PC-3 (cell line): ENCODE measurements at regions of chr4 and their contacts with region 1.

Region 1: DNA sequence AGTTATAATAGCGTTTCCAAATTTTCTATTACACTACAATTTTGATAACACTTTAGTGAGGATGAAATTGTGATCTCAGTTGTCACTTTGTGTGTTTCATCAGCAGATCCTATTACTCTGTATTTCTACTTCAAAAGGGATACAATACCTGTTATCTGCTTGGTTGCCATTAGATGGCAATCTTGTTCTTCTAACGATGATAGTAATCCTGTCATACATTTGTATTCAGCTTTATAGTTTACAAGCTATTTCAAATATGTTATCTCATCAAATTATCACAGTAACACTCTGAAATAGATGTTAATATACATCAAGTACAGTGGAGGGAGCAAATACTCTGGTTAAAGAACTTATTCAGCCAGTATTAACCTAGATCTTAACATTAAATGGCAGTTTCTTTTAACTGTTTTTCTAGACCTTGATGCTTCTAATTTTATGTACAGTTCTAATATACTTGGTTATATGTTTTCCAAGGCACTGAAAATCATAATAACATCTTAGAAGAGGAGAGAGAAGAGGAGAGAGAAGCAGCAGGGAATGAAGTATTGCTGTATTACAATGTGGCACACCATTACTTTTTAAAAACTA is 292.0 kb downstream of the CCSER1 start:
- DNase-seq: peak; percentile 56
- ATAC-seq: peak; percentile 81
- H3K4me3 ChIP-seq: no peak overlapping the region
- H3K27ac ChIP-seq: no peak overlapping the region
- H3K4me1 ChIP-seq: no peaks in the 10 kb centered on the region; the same call in 1 of the 2 replicates
- H3K27me3 ChIP-seq: no peaks in the 10 kb centered on the region
- CTCF ChIP-seq: peak; percentile 78

Region 2: DNA sequence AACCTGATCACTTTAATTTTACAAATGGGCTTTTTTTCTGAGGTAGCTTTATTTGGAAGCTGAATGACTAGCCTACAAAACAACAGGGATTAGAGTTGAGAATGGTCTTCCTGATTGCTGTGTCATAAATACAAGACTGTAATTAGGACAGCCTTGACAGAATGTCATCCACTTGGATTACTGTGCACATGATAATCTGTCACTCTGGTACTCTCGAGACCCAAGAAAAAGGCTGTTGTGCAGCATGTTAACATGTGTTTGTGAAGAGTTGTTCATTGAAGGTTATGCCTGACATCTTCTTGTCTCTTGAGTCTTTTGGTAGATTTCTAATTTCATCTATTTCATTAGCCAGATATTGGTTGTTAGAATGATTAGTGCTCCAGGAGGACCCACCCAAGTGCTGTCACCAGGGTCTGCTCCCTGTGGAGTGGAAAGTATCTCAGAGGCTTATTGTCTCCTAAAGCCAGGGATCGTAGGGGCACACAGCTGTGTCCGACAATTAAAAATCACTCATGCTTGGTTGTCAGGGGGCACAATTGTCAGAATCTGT is 899.4 kb before region 1 on chr4:
- CTCF ChIA-PET with region 1: no interaction called
- POLR2A ChIA-PET with region 1: no interaction called
- intact Hi-C with region 1: no loop called
- DNase-seq: no peak
- ATAC-seq: no peak
- H3K4me3 ChIP-seq: no peak overlapping the region
- H3K27ac ChIP-seq: no peak overlapping the region
- H3K4me1 ChIP-seq: no peaks in the 10 kb centered on the region
- H3K27me3 ChIP-seq: peaks cover 67% of the 10 kb centered on the region
- CTCF ChIP-seq: no peak

Region 3: DNA sequence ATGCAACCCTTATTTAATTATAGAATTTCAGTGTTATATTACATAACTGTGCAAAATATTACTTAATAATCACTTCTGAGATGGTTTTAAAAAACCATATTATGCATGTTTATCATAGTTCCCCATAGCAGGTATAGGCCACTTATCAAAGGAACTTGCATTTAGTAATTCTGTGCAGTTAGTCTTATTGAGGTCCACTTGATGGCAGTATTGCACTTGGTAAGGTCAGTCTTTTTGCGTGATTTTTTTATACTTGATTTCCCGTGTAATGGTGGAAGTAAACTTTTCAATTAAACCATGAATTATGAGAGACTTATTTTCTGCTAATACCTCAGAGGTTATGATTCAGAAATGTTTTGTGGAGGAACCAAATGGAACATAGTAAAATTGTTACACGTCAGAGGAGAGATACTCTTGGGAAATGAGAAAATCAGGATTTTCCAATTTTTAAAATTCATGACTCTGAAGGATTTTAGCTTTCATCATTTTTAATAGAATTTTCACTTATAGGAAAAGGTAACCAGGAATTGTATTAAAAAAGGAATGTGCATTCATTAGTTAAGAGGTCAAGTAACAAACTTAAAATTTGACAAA is 62.0 kb before region 1 on chr4:
- CTCF ChIA-PET with region 1: no interaction called
- POLR2A ChIA-PET with region 1: no interaction called
- intact Hi-C with region 1: loop called (anchors 2 kb)
- DNase-seq: peak; percentile 58
- ATAC-seq: peak; percentile 54
- H3K4me3 ChIP-seq: no peak overlapping the region; the same call in 1 of the 2 replicates
- H3K27ac ChIP-seq: no peak overlapping the region
- H3K4me1 ChIP-seq: no peaks in the 10 kb centered on the region
- H3K27me3 ChIP-seq: no peaks in the 10 kb centered on the region
- CTCF ChIP-seq: peak; percentile 83

Region 4: GRCh38 chr4:90951027-90951426 is 531.8 kb after region 1 on chr4:
- CTCF ChIA-PET with region 1: no interaction called
- POLR2A ChIA-PET with region 1: no interaction called
- intact Hi-C with region 1: loop called (anchors 10 kb)
- DNase-seq: peak; percentile 92
- ATAC-seq: peak; percentile 97
- H3K4me3 ChIP-seq: peak overlapping the region; percentile 46
- H3K27ac ChIP-seq: peak overlapping the region; percentile 74
- H3K4me1 ChIP-seq: peaks cover 29% of the 10 kb centered on the region
- H3K27me3 ChIP-seq: no peaks in the 10 kb centered on the region
- CTCF ChIP-seq: no peak

Region 5: GRCh38 chr4:91113130-91113706 is 694.0 kb after region 1 on chr4:
- CTCF ChIA-PET with region 1: interaction called, 6 read pairs
- POLR2A ChIA-PET with region 1: no interaction called
- intact Hi-C with region 1: loop called (anchors 2 kb)
- DNase-seq: peak; percentile 50
- ATAC-seq: no peak; the same call in 1 of the 2 replicates
- H3K4me3 ChIP-seq: no peak overlapping the region
- H3K27ac ChIP-seq: no peak overlapping the region
- H3K4me1 ChIP-seq: no peaks in the 10 kb centered on the region
- H3K27me3 ChIP-seq: no peaks in the 10 kb centered on the region
- CTCF ChIP-seq: peak; percentile 78

Region 6: GRCh38 chr4:91734682-91735081 is 1315.5 kb after region 1 on chr4:
- CTCF ChIA-PET with region 1: no interaction called
- POLR2A ChIA-PET with region 1: no interaction called
- intact Hi-C with region 1: loop called (anchors 10 kb)
- DNase-seq: peak; percentile 43
- ATAC-seq: 0 out of 2 replicates have a peak, but pooled peaks have one; percentile 29
- H3K4me3 ChIP-seq: no peak overlapping the region
- H3K27ac ChIP-seq: no peak overlapping the region
- H3K4me1 ChIP-seq: no peaks in the 10 kb centered on the region
- H3K27me3 ChIP-seq: no peaks in the 10 kb centered on the region
- CTCF ChIP-seq: peak; percentile 56